Caco-2 (cell line): ENCODE measurements at regions of chr2 and their contacts with region 1.

Region 1: DNA sequence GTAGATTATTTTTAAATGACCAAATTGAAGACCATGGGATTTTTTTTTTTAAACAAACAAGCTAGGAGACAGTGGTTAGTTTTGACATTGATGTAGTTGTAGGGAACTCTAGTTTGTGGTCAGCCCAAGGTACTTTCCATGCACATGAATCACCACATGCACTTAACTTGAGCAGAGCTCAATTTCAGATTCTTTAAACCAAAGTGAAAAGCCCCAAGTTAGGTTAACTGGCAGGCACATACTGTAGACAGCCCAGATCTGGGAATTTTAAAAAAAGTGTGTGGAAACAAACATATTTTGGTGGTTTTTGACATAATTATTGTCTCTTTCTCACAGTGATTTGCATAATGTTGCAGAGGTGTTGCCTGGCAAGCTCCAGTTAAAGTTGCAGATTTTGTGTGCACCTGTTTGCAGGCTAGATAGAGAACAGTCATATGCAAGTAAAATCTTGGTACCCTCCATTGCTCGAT is 88.4 kb downstream of the BCL2L11 start:
- DNase-seq: no peak
- H3K4me3 ChIP-seq: no peak overlapping the region
- H3K4me3 Mint-ChIP-seq: no peak overlapping the region
- H3K27ac Mint-ChIP-seq: no peak overlapping the region
- H3K4me1 ChIP-seq: peaks cover 22% of the 10 kb centered on the region
- H3K4me1 Mint-ChIP-seq: peaks cover 17% of the 10 kb centered on the region
- H3K27me3 ChIP-seq: no peaks in the 10 kb centered on the region
- H3K27me3 Mint-ChIP-seq: no peaks in the 10 kb centered on the region
- CTCF ChIP-seq: no peak

Region 2: GRCh38 chr2:111120253-111121027 is 88.6 kb before region 1 on chr2 and contains the start of gene BCL2L11:
- CTCF ChIA-PET with region 1: no interaction called
- POLR2A ChIA-PET with region 1: no interaction called
- intact Hi-C with region 1: no loop called
- DNase-seq: peak; percentile 98 to 99
- H3K4me3 ChIP-seq: peak within 1 kb of the TSS; percentile 99
- H3K4me3 Mint-ChIP-seq: peak within 1 kb of the TSS; percentile 93
- H3K27ac Mint-ChIP-seq: peak within 1 kb of the TSS; percentile 90
- H3K4me1 ChIP-seq: no peaks in the 10 kb centered on the region
- H3K4me1 Mint-ChIP-seq: peaks cover 11% of the 10 kb centered on the region
- H3K27me3 ChIP-seq: no peaks in the 10 kb centered on the region
- H3K27me3 Mint-ChIP-seq: no peaks in the 10 kb centered on the region
- CTCF ChIP-seq: peak; percentile 25 to 44
- total RNA-seq, gene BCL2L11: 27.7 and 28.9 TPM in 2 replicates

Region 3: GRCh38 chr2:111178730-111179405 is 30.2 kb before region 1 on chr2:
- CTCF ChIA-PET with region 1: no interaction called
- POLR2A ChIA-PET with region 1: no interaction called
- intact Hi-C with region 1: loop called (anchors 1 kb)
- DNase-seq: peak; percentile 55 to 59
- H3K4me3 ChIP-seq: no peak overlapping the region
- H3K4me3 Mint-ChIP-seq: no peak overlapping the region
- H3K27ac Mint-ChIP-seq: peak overlapping the region; percentile 42
- H3K4me1 ChIP-seq: peaks cover 29% of the 10 kb centered on the region
- H3K4me1 Mint-ChIP-seq: peaks cover 16% of the 10 kb centered on the region
- H3K27me3 ChIP-seq: no peaks in the 10 kb centered on the region
- H3K27me3 Mint-ChIP-seq: no peaks in the 10 kb centered on the region
- CTCF ChIP-seq: no peak

Region 4: GRCh38 chr2:111185638-111186022 is 23.4 kb before region 1 on chr2:
- CTCF ChIA-PET with region 1: interaction called, 4 read pairs
- POLR2A ChIA-PET with region 1: no interaction called
- intact Hi-C with region 1: loop called (anchors 2 kb)
- DNase-seq: peak; percentile 73 to 87
- H3K4me3 ChIP-seq: no peak overlapping the region
- H3K4me3 Mint-ChIP-seq: peak overlapping the region; percentile 37
- H3K27ac Mint-ChIP-seq: peak overlapping the region; percentile 9
- H3K4me1 ChIP-seq: peaks cover 25% of the 10 kb centered on the region
- H3K4me1 Mint-ChIP-seq: peaks cover 27% of the 10 kb centered on the region
- H3K27me3 ChIP-seq: no peaks in the 10 kb centered on the region; the same call in 1 of the 2 replicates
- H3K27me3 Mint-ChIP-seq: no peaks in the 10 kb centered on the region
- CTCF ChIP-seq: no peak